Posterior cingulate gyrus (tissue), 11 donors: ENCODE measurements at regions of chr5 and their contacts with region 1.

Region 1: DNA sequence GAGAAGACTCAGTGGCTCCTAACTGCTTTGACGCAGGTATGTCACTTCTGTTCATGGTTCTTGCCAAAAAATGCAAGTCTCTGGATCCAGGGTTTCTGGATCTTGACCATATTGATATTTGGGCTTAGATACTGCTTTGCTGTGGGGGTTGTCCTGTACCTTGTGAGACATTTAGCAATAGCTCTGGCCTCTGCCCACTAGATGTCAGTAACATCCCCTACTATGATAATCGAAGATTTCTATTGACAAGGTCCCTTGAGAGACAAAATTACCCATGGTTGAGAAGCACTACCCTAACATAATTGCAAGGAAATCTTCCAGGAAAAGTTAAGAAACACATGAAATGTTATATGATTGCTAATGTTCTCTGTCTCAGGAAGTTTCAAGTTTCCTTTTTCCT is 285.4 kb downstream of the TMEM232 start:
- DNase-seq: no peak

Region 2: DNA sequence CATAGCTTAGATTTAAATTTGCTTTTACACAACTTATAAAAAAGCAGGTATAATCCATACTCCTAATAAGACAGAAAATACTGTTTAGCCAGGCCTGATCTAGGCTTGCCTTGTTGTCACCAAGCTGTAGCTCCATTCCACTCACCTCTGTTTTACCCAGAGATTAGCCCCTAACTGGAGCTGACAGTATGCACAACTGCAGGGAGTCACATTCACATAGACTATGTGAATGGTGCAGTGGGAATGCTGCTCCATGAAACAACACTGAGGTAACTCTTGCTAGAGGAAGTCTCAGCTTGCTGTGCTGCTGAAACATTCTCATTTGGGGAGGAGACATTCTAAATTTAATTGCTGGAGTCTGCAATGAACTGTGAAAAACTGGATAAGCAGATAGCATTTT is 76.4 kb after region 1 on chr5:
- intact Hi-C with region 1: no loop called
- DNase-seq: no peak

Region 3: DNA sequence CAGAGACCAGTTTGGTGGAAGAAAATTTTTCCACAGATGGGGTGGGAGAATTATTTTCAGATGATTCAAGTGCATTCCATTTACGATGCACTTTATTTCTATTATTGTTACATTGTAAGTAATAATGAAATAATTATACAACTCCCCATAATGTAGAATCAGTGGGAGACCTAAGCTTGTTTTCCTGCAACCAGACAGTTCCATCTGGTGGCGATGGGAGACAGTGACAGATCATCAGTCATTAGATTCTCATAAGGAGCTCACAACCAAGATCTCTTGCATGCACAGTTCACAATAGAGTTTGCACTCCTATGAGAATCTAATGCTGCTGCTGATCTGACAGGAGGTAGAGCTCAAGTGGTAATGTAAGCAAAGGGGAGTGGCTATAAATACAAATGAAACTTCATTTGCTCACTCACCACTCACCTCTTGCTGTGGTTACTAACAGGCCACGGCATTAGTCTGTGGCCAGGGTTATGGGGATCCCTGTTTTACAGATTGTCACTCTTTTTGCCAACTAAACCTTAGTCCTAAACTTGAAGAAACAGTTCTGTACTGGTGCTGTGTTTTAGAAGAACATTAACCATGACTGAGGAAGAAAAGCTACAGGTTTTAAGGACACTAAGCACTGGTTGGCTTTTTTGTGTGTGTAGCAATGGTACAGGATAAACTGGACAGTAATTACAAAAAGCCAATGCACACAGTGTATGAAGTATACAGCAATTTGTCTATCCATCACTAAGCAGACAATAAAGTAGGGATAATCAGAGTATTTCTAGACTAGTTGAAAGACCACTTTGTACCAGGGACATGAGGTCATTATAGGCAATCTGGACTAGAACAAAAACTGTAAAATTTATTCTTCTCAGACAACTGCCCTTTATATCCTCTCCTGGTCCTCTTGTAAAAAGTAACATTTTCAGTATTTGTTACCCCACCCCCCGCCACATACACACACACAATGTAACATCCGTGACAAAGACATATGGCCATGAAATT is 275.5 kb after region 1 on chr5:
- intact Hi-C with region 1: loop called (anchors 10 kb)
- DNase-seq: no peak